Motor neuron (in vitro differentiated cells): ENCODE measurements at regions of chr11 and their contacts with region 1.

Region 1: DNA sequence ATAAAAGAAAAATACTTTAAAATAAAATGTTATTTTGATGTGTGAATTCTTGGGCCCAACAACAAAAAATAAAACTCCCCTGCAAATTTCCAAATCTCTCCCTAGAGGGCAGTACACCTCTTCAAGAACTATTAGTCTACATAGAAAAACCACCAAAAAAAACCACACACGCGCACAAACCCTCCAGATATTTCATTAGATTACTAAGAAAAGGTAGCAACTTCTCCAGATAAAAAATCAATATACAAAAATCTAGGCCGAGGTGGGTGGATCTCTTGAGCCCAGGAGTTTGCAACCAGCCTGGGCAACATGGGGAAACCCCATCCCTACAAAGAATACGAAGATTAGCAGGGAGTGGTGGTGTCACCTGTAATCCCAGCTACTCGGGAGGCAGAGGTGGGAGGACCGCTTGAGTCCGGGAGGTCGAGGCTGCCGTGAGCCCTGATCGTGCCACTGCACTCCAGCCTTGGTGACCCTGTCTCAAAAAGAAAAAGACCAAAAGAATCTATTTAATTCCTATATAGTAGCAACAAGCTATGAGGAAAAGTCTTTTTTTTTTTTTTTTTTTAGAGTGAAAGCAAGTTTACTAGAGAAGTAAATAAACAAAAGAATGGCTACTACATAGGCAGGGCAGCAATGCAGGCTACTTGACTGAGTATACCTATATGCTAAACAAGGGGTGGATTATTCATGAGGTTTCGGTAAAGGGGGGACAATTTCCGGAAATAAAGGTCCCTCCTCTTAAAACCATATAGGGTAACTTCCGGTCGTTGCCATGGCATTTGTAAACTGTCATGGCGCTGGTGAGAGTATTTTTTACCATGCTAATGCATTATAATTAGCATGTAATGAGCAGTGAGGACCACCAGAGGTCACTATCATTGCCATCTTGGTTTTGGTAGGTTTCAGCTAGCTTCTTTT is 13.1 kb downstream of the B3GNT6 start:
- ATAC-seq: peak; percentile 37 to 94 (median 71)
- H3K4me3 ChIP-seq: no peak overlapping the region
- H3K27ac ChIP-seq: no peak overlapping the region
- H3K4me1 ChIP-seq: no peaks in the 10 kb centered on the region

Region 2: DNA sequence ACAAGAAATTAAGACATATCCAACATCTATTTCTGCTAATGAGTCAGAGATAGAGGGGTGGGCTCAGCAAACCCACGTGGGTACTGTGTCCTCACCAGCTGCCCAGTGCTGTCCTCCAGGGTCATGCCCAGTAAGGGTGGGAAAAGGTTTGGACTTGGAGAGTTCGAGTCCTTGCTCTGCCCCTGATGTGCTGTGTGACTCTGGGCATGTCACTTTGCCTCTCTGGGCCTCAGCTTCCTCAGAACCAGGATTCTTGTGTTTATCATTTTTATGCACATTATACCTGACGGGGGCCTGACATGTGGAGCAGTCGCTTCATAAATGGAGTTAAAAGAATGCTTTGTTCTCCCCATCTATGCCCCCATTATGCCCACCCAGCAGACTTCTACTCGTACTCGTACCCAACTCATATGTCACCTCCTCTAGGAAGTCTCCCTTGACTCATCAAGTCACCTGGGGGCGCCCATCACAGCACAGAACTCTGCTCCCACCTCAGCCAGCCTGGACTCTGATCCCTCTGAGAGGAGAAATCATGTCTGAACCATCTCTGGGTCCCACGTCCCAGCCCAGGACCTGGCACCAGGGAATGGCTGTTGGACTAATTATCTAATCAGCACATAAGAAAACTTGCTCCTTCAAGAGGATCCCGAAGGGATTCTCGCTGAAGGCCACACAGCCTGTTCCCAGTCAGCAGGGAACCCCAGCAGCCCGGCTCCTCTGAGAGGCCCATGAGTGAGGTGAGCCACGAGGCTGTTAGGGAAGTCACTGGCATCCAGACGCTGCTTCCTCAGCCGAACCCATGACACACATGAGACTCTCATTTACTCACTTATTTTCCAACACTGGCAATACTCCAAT is 302.9 kb before region 1 on chr11:
- in situ Hi-C with region 1: loop called in 4 of 9 experiments (anchors 25 kb)
- ATAC-seq: peak in 1 of 8 experiments; percentile 34
- H3K4me3 ChIP-seq: no peak overlapping the region
- H3K27ac ChIP-seq: no peak overlapping the region
- H3K4me1 ChIP-seq: no peaks in the 10 kb centered on the region

Region 3: GRCh38 chr11:76807206-76807875 is 239.9 kb before region 1 on chr11:
- in situ Hi-C with region 1: loop called in 1 of 9 experiments (anchors 25 kb)
- ATAC-seq: peak; percentile 68 to 94 (median 90)
- H3K4me3 ChIP-seq: no peak overlapping the region
- H3K27ac ChIP-seq: no peak overlapping the region
- H3K4me1 ChIP-seq: no peaks in the 10 kb centered on the region

Region 4: DNA sequence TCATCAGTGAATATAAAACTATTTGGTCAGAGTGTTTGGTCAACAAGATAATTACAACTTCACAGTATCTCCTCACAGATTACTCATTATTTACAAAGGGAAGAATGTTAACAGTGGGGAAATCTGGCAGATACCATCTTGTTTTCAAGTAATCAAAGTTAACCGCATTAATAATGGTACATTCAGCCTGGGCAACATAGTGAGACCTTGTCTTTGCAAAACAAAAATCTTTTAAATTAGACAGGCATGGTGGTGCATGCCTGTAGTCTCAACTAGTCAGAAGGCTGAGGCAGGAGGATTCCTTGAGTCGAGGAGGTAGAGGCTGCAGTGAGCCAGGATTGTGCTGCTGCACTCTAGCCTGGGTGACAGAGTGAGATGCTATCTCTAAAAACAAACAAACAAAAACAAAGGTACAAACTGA is 108.0 kb before region 1 on chr11:
- in situ Hi-C with region 1: loop called in 1 of 9 experiments (anchors 25 kb)
- ATAC-seq: no peak
- H3K4me3 ChIP-seq: no peak overlapping the region
- H3K27ac ChIP-seq: no peak overlapping the region
- H3K4me1 ChIP-seq: no peaks in the 10 kb centered on the region

Region 5: DNA sequence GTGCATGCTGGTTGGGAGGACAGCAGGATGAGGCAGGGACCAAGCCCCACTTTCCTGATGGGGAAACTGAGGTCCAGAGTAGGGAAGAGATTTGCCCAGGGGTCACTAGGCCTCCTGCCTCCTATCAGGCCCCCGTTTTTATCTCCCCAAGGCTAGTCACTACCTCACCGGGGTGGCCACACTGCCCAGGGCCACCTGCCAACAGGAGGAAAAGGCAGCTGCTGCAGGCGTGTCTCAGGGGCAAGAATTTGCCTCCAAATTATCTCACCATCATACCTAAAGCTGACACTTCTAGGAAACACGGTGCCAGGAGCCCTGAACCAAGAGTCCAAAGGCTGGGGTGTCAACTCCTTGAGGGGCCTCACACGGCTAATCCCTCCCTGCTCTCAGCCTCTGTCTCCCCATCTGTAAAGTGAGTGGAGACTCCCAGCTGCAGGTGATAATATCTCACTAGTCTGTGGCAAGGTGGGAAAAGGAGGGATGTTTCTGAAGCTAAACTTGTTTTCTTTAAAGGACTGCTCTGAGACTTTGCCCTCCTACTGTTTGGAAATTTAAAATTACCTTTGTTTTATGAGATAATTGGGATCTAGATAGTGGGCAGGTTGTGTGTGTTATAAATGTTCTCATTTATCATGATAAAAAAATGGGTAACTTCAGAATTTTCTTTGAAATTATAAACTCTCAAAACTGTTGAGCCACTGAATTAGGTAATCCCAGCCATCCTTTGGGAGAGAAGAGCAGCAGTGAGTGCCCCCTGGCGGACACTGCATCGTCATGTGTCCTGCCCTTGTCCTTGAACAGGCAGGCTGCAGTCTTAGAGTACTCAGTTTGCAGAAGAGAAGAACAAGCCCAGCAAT is 140.7 kb after region 1 on chr11:
- in situ Hi-C with region 1: loop called in 1 of 9 experiments (anchors 25 kb)
- ATAC-seq: peak; percentile 58 to 92 (median 84)
- H3K4me3 ChIP-seq: no peak overlapping the region
- H3K27ac ChIP-seq: no peak overlapping the region
- H3K4me1 ChIP-seq: peaks cover 13 to 14% of the 10 kb centered on the region in 2 donors

Region 6: GRCh38 chr11:77752518-77752917 is 705.3 kb after region 1 on chr11:
- in situ Hi-C with region 1: no loop called
- ATAC-seq: peak in 1 of 8 experiments; percentile 74
- H3K4me3 ChIP-seq: no peak overlapping the region
- H3K27ac ChIP-seq: peak overlapping the region in 1 of 2 donors; percentile 37
- H3K4me1 ChIP-seq: peaks cover 0 to 3% of the 10 kb centered on the region in 2 donors